Activated CD4-positive, alpha-beta T cell treated with anti-CD3 and anti-CD28 coated beads for 36 hours (primary cell): ENCODE measurements at regions of chr5 and their contacts with region 1.

Region 1: GRCh38 chr5:77030097-77031071 is at the start of gene AGGF1:
- DNase-seq: peak; percentile 96
- ATAC-seq: peak; percentile 98
- H3K4me3 Mint-ChIP-seq: peak within 1 kb of the TSS; percentile 87
- H3K27ac Mint-ChIP-seq: peak within 1 kb of the TSS; percentile 94
- H3K4me1 Mint-ChIP-seq: peaks cover 30% of the 10 kb centered on the region
- H3K27me3 Mint-ChIP-seq: no peaks in the 10 kb centered on the region
- total RNA-seq, gene AGGF1: 25.5 to 33.2 TPM

Region 2: GRCh38 chr5:77076961-77077823 is 46.8 kb after region 1 on chr5:
- CTCF ChIA-PET with region 1: interaction called, 16 read pairs
- POLR2A ChIA-PET with region 1: no interaction called
- intact Hi-C with region 1: loop called in 1 of 2 experiments (anchors 5 kb)
- DNase-seq: peak; percentile 82
- ATAC-seq: peak; percentile 84
- H3K4me3 Mint-ChIP-seq: peak overlapping the region; percentile 31
- H3K27ac Mint-ChIP-seq: no peak overlapping the region
- H3K4me1 Mint-ChIP-seq: peaks cover 11% of the 10 kb centered on the region
- H3K27me3 Mint-ChIP-seq: no peaks in the 10 kb centered on the region

Region 3: DNA sequence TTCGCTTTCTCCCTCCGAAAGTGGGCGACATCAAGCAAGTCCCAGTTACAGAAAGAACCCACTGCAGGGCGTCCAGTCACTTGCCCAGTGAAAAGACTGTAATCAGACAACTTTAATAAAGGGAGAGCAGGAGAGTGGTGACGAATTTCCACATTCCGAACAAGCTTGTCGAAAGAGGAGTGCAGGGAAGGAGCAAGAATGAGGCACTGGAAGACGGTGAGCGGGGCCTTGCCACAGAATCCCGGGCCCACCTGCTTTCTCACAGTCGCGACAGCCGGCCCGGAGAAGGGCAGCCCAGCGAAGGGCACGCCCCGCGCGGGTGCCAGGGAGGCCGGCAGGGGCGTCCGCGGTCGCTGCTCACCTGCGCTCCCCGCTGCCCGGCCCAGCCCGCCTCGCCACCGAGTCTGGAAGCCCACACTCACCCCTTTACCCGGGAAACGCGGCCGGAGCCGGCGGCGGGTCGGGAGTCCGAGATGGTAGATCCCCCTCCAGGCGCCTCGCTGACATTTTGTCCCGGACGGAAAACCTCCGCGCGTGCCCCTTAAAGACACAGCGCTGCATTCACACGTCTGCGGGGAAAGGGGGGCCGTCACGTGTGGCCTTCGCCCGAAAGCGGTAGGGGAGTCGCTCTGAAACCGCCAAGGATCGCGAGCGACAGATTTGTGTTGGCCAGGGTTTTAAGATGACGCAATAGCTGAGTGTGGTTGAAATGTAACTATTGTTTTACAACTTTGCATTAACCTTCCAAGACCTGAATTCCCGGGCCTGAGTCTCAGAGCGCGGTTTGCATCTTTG is 56.5 kb after region 1 on chr5 and contains the start of gene ZBED3:
- CTCF ChIA-PET with region 1: interaction called, 9 read pairs
- POLR2A ChIA-PET with region 1: no interaction called
- intact Hi-C with region 1: loop called (anchors 2 to 5 kb)
- DNase-seq: peak; percentile 73
- ATAC-seq: peak; percentile 76
- H3K4me3 Mint-ChIP-seq: peak within 1 kb of the TSS; percentile 85
- H3K27ac Mint-ChIP-seq: peak within 1 kb of the TSS; percentile 91
- H3K4me1 Mint-ChIP-seq: peaks cover 14% of the 10 kb centered on the region
- H3K27me3 Mint-ChIP-seq: peaks cover 2% of the 10 kb centered on the region
- total RNA-seq, gene ZBED3: 2.2 to 2.9 TPM

Region 4: DNA sequence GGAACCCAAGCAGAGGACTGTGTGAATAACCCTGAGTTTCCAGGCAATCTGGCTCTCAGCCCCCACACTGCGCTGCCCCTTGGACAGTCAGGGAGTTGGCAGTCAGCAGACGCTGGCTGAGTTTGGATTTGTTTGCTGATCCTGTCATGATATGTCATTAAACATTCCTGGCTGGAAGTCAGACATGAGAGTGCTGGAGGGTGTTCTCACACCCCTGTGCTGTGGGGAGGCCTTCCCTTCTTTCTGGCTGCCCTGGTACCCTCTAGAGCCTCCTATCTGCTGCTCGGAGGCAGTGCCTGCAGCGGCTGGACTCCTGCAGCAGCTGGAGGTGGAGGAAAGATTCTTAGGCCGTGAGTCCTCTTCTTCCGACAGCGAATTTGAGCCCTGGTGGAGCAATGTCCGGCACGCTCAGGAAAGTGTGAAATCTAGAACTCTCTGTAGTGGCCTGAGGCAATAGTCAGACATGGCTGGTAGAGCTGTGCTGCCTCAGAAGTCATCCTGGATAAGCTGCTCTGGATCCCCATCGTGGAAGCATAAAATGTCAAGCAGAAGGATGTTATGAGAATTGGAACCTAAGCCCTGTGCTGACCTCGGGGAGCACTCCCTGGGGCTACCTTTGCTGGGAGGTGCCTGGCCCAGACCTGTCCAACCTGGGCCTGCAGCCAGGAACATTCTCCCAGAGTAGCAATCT is 252.1 kb after region 1 on chr5:
- CTCF ChIA-PET with region 1: no interaction called
- POLR2A ChIA-PET with region 1: no interaction called
- intact Hi-C with region 1: no loop called
- DNase-seq: no peak
- ATAC-seq: no peak
- H3K4me3 Mint-ChIP-seq: no peak overlapping the region
- H3K27ac Mint-ChIP-seq: no peak overlapping the region
- H3K4me1 Mint-ChIP-seq: peaks cover 7% of the 10 kb centered on the region
- H3K27me3 Mint-ChIP-seq: peaks cover 2% of the 10 kb centered on the region